MCF 10A (cell line): ENCODE measurements at regions of chr3 and their contacts with region 1.

Region 1: GRCh38 chr3:105366326-105367062 is at the start of gene ALCAM:
- DNase-seq: peak; percentile 99
- H3K4me3 Mint-ChIP-seq: peak within 1 kb of the TSS; percentile 100
- H3K27ac Mint-ChIP-seq: peak within 1 kb of the TSS; percentile 98
- H3K4me1 Mint-ChIP-seq: peaks cover 23% of the 10 kb centered on the region
- H3K27me3 Mint-ChIP-seq: no peaks in the 10 kb centered on the region
- CTCF ChIP-seq: peak; percentile 48
- total RNA-seq, gene ALCAM: 98.4 and 112 TPM in 2 replicates

Region 2: DNA sequence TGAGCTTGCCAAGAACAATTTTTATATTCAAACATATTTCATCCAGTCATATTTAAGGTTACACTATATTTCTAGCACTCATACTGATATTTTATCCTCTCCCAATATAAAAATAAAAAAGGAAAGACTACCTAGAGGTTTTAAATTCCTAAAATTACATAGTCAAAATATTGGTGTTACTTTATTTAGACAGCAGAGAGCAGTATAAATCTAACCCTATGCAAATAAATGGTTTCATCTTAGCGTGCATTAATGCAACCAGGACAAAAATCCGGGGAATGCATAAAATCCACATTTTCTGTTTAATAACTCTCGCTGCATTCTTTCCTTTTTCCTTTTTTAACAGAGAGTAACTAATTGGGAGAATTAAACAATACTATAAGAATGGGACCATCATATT is 1447.2 kb before region 1 on chr3:
- CTCF ChIA-PET with region 1: no interaction called
- POLR2A ChIA-PET with region 1: no interaction called
- intact Hi-C with region 1: loop called (anchors 5 kb)
- DNase-seq: no peak
- H3K4me3 Mint-ChIP-seq: no peak overlapping the region
- H3K27ac Mint-ChIP-seq: no peak overlapping the region
- H3K4me1 Mint-ChIP-seq: no peaks in the 10 kb centered on the region
- H3K27me3 Mint-ChIP-seq: peaks cover 84% of the 10 kb centered on the region
- CTCF ChIP-seq: no peak

Region 3: GRCh38 chr3:104604369-104605010 is 762.0 kb before region 1 on chr3:
- CTCF ChIA-PET with region 1: interaction called, 70 read pairs
- POLR2A ChIA-PET with region 1: interaction called, 11 read pairs
- intact Hi-C with region 1: loop called (anchors 1 kb)
- DNase-seq: peak; percentile 33
- H3K4me3 Mint-ChIP-seq: no peak overlapping the region
- H3K27ac Mint-ChIP-seq: no peak overlapping the region
- H3K4me1 Mint-ChIP-seq: peaks cover 6% of the 10 kb centered on the region
- H3K27me3 Mint-ChIP-seq: no peaks in the 10 kb centered on the region
- CTCF ChIP-seq: peak; percentile 43

Region 4: DNA sequence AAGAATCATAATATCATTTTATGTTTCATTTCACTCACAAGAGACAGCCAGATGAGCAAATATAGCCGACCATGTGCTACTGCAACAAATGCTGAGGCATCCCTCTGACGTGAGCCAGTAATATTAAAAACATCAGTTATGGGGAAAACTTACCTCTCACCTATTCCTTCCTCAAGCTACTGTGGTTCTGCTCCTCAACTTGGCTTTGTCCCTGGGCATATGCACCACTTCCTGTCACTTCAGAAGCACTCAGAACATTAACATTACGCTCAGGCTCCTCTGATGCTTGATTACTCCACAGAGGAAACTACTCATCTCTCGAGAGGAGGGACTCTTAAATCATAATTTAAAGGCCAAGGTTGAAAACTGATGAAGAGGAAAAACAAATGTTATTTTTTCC is 456.8 kb before region 1 on chr3:
- CTCF ChIA-PET with region 1: interaction called, 4 read pairs
- POLR2A ChIA-PET with region 1: interaction called, 4 read pairs
- intact Hi-C with region 1: loop called (anchors 10 kb)
- DNase-seq: no peak
- H3K4me3 Mint-ChIP-seq: no peak overlapping the region
- H3K27ac Mint-ChIP-seq: no peak overlapping the region
- H3K4me1 Mint-ChIP-seq: no peaks in the 10 kb centered on the region
- H3K27me3 Mint-ChIP-seq: no peaks in the 10 kb centered on the region
- CTCF ChIP-seq: no peak

Region 5: DNA sequence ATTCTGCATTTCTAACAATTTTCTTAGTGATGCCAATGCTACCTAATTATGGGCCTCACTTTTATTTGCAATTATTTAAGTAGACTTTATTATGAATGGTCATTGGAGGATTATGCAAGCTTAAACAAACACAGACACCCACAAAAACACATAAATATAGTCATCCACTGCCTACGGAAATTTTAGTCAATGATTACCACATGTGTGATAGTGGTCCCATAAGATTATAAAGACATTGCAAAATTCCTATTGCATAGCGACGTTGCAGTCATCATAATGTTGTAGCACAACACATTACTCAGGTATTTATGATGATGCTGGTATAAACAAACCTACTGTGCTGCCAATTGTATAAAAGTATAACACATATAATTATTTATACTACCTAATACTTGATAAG is 247.6 kb before region 1 on chr3:
- CTCF ChIA-PET with region 1: no interaction called
- POLR2A ChIA-PET with region 1: no interaction called
- intact Hi-C with region 1: loop called (anchors 5 kb)
- DNase-seq: peak; percentile 75
- H3K4me3 Mint-ChIP-seq: no peak overlapping the region
- H3K27ac Mint-ChIP-seq: no peak overlapping the region
- H3K4me1 Mint-ChIP-seq: peaks cover 6% of the 10 kb centered on the region
- H3K27me3 Mint-ChIP-seq: no peaks in the 10 kb centered on the region
- CTCF ChIP-seq: no peak

Region 6: DNA sequence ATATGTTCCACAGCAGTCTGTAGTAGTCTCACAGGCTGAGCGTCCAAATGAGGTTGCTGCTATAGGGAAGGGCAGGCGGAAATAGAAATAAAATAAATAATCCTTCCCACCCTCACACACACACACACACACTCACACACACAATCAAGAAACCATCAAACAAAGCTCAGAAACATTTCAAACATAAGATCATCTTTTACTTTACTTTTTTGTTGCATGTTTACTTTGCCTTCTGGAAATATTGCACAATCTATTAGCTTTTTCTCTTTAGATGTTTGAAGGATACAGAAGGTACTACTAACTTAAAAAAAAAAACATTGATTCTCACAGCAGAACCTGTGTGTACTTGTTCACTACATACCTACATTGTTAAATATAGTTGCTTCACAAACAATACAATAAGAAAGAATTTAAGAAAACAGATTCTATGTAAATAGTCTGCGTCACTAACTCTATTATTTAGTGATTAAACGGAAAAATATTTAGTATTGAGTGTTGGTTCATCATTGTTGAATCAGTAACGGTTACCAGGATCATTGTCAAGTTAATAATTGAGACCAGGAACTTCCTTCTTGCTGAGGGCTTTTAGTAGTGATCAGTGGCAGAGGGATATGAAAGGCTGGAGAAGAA is 20.7 kb after region 1 on chr3:
- CTCF ChIA-PET with region 1: interaction called, 4 read pairs
- POLR2A ChIA-PET with region 1: interaction called, 20 read pairs
- intact Hi-C with region 1: no loop called
- DNase-seq: peak; percentile 53
- H3K4me3 Mint-ChIP-seq: peak overlapping the region; percentile 49
- H3K27ac Mint-ChIP-seq: peak overlapping the region; percentile 77
- H3K4me1 Mint-ChIP-seq: peaks cover 45% of the 10 kb centered on the region
- H3K27me3 Mint-ChIP-seq: no peaks in the 10 kb centered on the region
- CTCF ChIP-seq: no peak

Region 7: GRCh38 chr3:105539897-105540296 is 173.4 kb after region 1 on chr3:
- CTCF ChIA-PET with region 1: no interaction called
- POLR2A ChIA-PET with region 1: no interaction called
- intact Hi-C with region 1: no loop called
- DNase-seq: no peak
- H3K4me3 Mint-ChIP-seq: no peak overlapping the region
- H3K27ac Mint-ChIP-seq: no peak overlapping the region
- H3K4me1 Mint-ChIP-seq: peaks cover 8% of the 10 kb centered on the region
- H3K27me3 Mint-ChIP-seq: no peaks in the 10 kb centered on the region
- CTCF ChIP-seq: no peak

Region 8: GRCh38 chr3:105564546-105565288 is 198.2 kb after region 1 on chr3:
- CTCF ChIA-PET with region 1: no interaction called
- POLR2A ChIA-PET with region 1: no interaction called
- intact Hi-C with region 1: no loop called
- DNase-seq: no peak
- H3K4me3 Mint-ChIP-seq: no peak overlapping the region
- H3K27ac Mint-ChIP-seq: no peak overlapping the region
- H3K4me1 Mint-ChIP-seq: peaks cover 5% of the 10 kb centered on the region
- H3K27me3 Mint-ChIP-seq: no peaks in the 10 kb centered on the region
- CTCF ChIP-seq: no peak